PC-9 (cell line): ENCODE measurements at regions of chr4 and their contacts with region 1.

Region 1: GRCh38 chr4:177855507-177856197 is 413.4 kb upstream of the AGA start:
- DNase-seq: no peak
- H3K4me3 ChIP-seq: no peak overlapping the region
- H3K27ac ChIP-seq: no peak overlapping the region
- H3K4me1 ChIP-seq: no peaks in the 10 kb centered on the region
- H3K27me3 ChIP-seq: no peaks in the 10 kb centered on the region
- CTCF ChIP-seq: no peak

Region 2: GRCh38 chr4:177989503-177990201 is 134.0 kb after region 1 on chr4:
- CTCF ChIA-PET with region 1: no interaction called
- POLR2A ChIA-PET with region 1: interaction called, 11 read pairs
- intact Hi-C with region 1: no loop called
- DNase-seq: no peak
- H3K4me3 ChIP-seq: no peak overlapping the region
- H3K27ac ChIP-seq: no peak overlapping the region
- H3K4me1 ChIP-seq: no peaks in the 10 kb centered on the region
- H3K27me3 ChIP-seq: no peaks in the 10 kb centered on the region
- CTCF ChIP-seq: no peak

Region 3: GRCh38 chr4:178556796-178557195 is 701.1 kb after region 1 on chr4:
- CTCF ChIA-PET with region 1: no interaction called
- POLR2A ChIA-PET with region 1: no interaction called
- intact Hi-C with region 1: no loop called
- DNase-seq: peak in 1 of 2 experiments; percentile 71
- H3K4me3 ChIP-seq: no peak overlapping the region
- H3K27ac ChIP-seq: 0 out of 2 replicates have a peak overlapping the region, but pooled peaks have one; percentile 24
- H3K4me1 ChIP-seq: no peaks in the 10 kb centered on the region
- H3K27me3 ChIP-seq: no peaks in the 10 kb centered on the region
- CTCF ChIP-seq: no peak